PC-3 (cell line): ENCODE measurements at regions of chr14 and their contacts with region 1.

Region 1: DNA sequence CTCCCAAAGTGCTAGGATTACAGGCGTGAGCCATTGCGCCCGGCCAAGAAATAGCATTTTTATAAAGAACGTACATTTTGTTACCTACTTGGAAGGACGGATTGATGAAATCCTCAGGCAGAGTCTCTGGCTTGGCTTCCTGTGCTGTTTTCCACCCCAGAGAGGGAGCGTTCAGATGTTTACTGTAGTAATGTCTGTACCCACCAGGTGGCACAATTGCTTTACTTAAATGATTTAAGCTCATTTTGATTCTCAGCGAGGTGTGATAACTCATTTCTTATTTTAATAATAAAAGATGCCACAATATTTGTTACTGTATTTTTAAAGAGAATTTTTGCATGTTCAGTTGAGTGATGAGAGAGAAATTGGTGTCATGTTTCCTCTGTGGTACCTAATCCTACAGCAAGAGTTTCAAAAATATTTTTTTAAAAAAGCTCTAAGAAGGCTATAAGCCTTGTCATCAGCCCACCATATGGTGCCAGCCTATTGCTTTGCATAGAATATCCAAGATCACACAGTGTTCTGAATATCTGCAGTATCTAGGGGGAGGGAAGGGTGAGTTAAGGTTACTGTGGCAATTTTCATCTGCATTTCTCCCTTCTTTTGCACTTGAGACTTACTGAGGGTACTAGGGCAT is 82.6 kb upstream of the TRAF3 start:
- DNase-seq: peak; percentile 89
- ATAC-seq: peak; percentile 34; the same call in 1 of the 2 replicates
- H3K4me3 ChIP-seq: no peak overlapping the region
- H3K27ac ChIP-seq: no peak overlapping the region
- H3K4me1 ChIP-seq: peaks cover 47% of the 10 kb centered on the region
- H3K27me3 ChIP-seq: no peaks in the 10 kb centered on the region
- CTCF ChIP-seq: peak; percentile 74

Region 2: DNA sequence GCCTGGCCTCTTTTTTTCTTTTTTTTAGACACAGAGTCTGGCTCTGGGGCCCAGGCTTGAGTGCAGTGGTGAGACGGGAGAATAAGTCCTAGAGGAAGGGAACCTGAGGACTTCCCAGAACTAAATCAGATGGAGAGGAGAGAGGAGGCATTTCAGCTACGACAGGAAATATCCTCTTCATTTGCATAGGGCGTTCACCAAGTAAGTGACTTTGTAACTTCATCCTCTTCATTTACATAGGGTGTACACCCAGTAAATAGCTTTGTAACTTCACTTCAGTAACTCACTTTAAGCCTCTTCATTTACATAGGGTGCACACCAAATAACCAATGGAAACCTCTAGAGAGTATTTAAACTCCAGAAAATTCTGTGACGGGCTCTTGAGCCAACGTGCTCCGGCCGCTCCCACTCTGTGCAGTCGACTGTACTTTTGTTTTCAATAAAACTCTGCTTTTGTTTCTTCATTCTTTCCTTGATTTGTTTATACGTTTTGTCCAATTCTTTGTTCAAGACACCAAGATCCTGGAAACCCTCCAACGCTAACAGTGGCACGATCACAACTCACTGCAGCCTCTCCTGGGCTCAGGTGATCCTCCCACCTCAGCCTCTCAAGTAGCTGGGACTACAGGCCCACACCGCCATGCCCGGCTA is 163.7 kb before region 1 on chr14:
- CTCF ChIA-PET with region 1: no interaction called
- POLR2A ChIA-PET with region 1: no interaction called
- intact Hi-C with region 1: no loop called
- DNase-seq: peak; percentile 41
- ATAC-seq: peak; percentile 30
- H3K4me3 ChIP-seq: no peak overlapping the region
- H3K27ac ChIP-seq: peak overlapping the region; percentile 45
- H3K4me1 ChIP-seq: peaks cover 31% of the 10 kb centered on the region
- H3K27me3 ChIP-seq: no peaks in the 10 kb centered on the region
- CTCF ChIP-seq: no peak

Region 3: DNA sequence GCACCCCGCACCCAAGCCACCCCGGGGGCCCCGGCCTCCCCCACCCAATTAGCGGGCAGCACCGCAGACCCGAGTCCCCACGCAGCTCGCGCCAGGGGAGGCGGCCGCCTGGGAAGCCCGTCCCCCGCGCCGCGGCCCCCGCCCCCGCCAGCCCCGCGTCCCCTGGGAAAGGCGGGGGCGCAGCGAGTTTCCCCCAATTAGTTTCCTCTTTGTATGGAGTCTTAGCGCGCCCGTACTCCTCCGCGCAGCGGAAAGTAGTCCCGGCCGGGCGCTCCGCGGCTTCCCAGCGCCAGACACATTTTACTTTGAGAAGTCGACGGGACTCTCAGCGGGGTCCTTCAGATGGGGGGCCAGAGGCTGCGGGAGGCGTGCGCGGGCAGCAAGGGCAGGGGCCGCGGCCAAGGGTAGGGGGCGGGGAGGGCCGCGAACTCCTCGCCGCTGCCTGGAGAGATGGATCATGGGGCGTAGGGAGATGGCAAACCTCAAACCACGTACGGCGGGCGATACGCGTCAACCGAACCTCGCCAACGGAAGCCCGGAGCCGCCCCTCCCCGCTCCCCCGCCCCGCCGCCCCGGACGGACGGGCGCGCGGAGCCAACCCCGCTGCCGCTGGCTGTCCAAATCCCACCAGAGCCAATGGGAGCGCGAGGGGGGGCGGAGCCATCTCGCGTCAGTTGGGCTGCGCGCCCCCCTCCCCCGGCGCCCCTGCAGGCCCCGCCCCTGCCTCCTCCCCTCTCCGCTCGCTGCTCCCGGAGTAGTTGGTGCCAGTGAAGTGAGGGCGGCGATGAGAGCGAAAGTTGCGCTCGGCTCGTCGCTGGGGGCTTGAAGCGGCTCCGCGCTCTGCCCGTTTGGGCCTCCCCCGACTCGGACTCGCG is 102.5 kb before region 1 on chr14 and contains the start of gene RCOR1:
- CTCF ChIA-PET with region 1: interaction called, 7 read pairs
- POLR2A ChIA-PET with region 1: no interaction called
- intact Hi-C with region 1: loop called (anchors 5 kb)
- DNase-seq: peak; percentile 97
- ATAC-seq: peak; percentile 76
- H3K4me3 ChIP-seq: peak within 1 kb of the TSS; percentile 94
- H3K27ac ChIP-seq: peak within 1 kb of the TSS; percentile 91
- H3K4me1 ChIP-seq: peaks cover 21% of the 10 kb centered on the region
- H3K27me3 ChIP-seq: no peaks in the 10 kb centered on the region
- CTCF ChIP-seq: no peak
- total RNA-seq, gene RCOR1: 22.2 and 23.4 TPM in 2 replicates

Region 4: GRCh38 chr14:102629808-102630350 is 64.8 kb before region 1 on chr14:
- CTCF ChIA-PET with region 1: no interaction called
- POLR2A ChIA-PET with region 1: no interaction called
- intact Hi-C with region 1: no loop called
- DNase-seq: no peak
- ATAC-seq: peak; percentile 31
- H3K4me3 ChIP-seq: no peak overlapping the region
- H3K27ac ChIP-seq: no peak overlapping the region
- H3K4me1 ChIP-seq: 0 out of 2 replicates have a peak, but pooled peaks cover 2% of the 10 kb centered on the region
- H3K27me3 ChIP-seq: no peaks in the 10 kb centered on the region
- CTCF ChIP-seq: no peak

Region 5: GRCh38 chr14:102774391-102775153 is 79.9 kb after region 1 on chr14:
- CTCF ChIA-PET with region 1: no interaction called
- POLR2A ChIA-PET with region 1: no interaction called
- intact Hi-C with region 1: loop called (anchors 5 kb)
- DNase-seq: peak; percentile 65
- ATAC-seq: peak; percentile 27
- H3K4me3 ChIP-seq: peak overlapping the region; percentile 7; the same call in 1 of the 2 replicates
- H3K27ac ChIP-seq: peak overlapping the region; percentile 33
- H3K4me1 ChIP-seq: peaks cover 26% of the 10 kb centered on the region
- H3K27me3 ChIP-seq: no peaks in the 10 kb centered on the region
- CTCF ChIP-seq: peak; percentile 72

Region 6: DNA sequence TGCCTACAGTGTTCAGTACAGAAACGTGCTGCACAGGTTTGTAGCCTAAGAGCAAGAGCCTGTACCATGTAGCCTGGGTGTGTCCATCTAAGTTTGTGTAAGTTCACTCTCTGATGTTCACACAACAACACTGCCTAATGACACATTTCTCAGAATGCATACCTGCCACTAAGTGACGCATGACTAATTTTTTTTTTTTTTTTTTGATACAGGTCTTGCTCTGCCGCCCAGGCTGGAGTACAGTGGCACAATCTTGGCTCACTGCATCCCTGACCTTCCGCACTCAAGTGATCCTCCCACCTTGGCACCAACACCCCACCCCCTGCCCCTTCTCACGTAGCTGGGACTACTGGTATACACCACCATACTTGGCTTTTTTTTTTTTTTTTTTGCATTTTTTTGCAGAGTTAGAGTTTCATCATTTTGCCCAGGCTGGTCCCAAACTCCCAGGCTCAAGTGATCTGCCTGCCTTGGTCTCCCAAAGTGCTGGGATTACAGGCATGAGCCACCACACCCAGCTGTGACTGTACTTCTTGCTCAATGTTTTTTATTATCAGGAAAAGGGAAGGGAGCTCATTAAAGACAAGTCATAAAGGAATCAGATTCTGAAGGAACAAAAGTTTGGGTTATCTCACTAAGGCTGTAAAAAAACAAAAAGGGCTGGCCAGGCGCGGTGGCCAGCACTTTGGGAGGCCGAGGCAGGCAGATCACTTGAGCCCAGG is 372.7 kb after region 1 on chr14:
- CTCF ChIA-PET with region 1: interaction called, 13 read pairs
- POLR2A ChIA-PET with region 1: no interaction called
- intact Hi-C with region 1: no loop called
- DNase-seq: peak; percentile 83
- ATAC-seq: peak; percentile 63
- H3K4me3 ChIP-seq: no peak overlapping the region
- H3K27ac ChIP-seq: peak overlapping the region; percentile 80
- H3K4me1 ChIP-seq: peaks cover 38% of the 10 kb centered on the region
- H3K27me3 ChIP-seq: no peaks in the 10 kb centered on the region
- CTCF ChIP-seq: no peak